Dendritic cell treated with granulocyte-macrophage colony-stimulating factor and Interleukin-4, amounts not matched to agents 40 ng/mL and 50 ng/mL, for 4 days (primary cell): ENCODE measurements at regions of chr12 and their contacts with region 1.

Region 1: GRCh38 chr12:25436203-25437030 is 116.7 kb downstream of the LMNTD1 start:
- H3K4me3 Mint-ChIP-seq: peak overlapping the region; percentile 44
- H3K27ac Mint-ChIP-seq: no peak overlapping the region
- H3K4me1 Mint-ChIP-seq: peaks cover 7% of the 10 kb centered on the region
- H3K27me3 Mint-ChIP-seq: peaks cover 2% of the 10 kb centered on the region

Region 2: DNA sequence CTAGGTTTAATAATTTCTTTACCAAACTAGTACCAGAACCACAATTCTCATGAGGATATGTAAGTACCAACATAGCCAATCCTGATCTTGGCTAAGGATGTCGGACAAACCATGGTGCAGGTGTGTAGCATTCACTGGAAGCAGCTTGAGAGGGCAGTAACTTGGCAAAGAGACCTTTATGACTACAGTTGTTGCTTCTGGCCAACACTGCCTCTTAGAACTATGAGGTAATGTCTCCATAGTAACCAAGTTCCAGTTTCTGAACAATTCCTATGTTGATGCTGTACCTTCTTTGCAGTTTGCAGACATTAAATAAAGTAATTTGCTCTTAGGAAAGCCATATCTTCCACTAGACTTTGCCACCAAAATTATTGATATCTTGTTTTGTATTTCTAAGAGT is 116.7 kb after region 1 on chr12 and contains the start of gene LMNTD1:
- intact Hi-C with region 1: loop called (anchors 5 kb)
- H3K4me3 Mint-ChIP-seq: no peak within 1 kb of the TSS
- H3K27ac Mint-ChIP-seq: no peak within 1 kb of the TSS
- H3K4me1 Mint-ChIP-seq: peaks cover 5% of the 10 kb centered on the region
- H3K27me3 Mint-ChIP-seq: peaks cover 10% of the 10 kb centered on the region

Region 3: DNA sequence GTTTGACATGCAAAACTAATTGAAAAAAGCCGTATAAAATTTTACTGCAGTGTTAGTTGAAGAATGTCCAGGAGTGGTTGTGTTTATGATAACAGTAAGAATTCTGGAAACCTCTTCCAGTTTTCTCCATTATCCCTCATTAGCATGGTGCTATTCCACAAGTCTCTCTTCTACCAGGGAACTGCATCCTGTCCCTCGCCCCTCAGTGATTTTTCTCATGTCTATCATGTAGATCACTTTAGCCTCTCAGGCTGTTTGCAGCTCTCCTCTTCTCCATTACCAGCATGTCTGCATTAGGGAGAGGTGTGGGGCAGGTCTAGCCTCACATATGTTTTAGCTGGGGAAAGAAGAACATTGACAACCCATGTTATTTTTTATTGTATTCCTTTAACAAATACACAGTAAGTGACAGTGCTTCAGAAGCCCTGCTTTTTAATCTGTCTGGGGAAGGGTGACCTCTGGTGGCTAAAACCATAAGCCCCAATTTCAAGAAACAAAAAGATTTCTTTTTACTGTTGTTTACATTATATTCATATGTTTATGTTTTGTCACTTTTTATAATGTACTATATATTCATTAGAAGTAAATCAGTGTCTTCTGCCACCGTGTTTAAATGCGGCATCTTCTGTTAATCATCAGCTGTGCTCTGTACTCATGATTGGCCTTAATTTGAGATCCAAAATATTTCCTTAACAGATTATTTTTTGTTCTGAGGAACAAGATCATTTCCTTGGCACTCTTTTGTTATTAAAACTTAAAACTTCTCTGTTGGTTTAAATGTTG is 592.7 kb after region 1 on chr12:
- intact Hi-C with region 1: loop called (anchors 1 kb)
- H3K4me3 Mint-ChIP-seq: no peak overlapping the region
- H3K27ac Mint-ChIP-seq: no peak overlapping the region
- H3K4me1 Mint-ChIP-seq: no peaks in the 10 kb centered on the region
- H3K27me3 Mint-ChIP-seq: no peaks in the 10 kb centered on the region